MCF 10A (cell line): ENCODE measurements at regions of chr11 and their contacts with region 1.

Region 1: GRCh38 chr11:126231725-126232459 is 20.3 kb downstream of the FAM118B start:
- DNase-seq: peak; percentile 18
- H3K4me3 Mint-ChIP-seq: no peak overlapping the region
- H3K27ac Mint-ChIP-seq: no peak overlapping the region
- H3K4me1 Mint-ChIP-seq: no peaks in the 10 kb centered on the region
- H3K27me3 Mint-ChIP-seq: no peaks in the 10 kb centered on the region
- CTCF ChIP-seq: no peak

Region 2: DNA sequence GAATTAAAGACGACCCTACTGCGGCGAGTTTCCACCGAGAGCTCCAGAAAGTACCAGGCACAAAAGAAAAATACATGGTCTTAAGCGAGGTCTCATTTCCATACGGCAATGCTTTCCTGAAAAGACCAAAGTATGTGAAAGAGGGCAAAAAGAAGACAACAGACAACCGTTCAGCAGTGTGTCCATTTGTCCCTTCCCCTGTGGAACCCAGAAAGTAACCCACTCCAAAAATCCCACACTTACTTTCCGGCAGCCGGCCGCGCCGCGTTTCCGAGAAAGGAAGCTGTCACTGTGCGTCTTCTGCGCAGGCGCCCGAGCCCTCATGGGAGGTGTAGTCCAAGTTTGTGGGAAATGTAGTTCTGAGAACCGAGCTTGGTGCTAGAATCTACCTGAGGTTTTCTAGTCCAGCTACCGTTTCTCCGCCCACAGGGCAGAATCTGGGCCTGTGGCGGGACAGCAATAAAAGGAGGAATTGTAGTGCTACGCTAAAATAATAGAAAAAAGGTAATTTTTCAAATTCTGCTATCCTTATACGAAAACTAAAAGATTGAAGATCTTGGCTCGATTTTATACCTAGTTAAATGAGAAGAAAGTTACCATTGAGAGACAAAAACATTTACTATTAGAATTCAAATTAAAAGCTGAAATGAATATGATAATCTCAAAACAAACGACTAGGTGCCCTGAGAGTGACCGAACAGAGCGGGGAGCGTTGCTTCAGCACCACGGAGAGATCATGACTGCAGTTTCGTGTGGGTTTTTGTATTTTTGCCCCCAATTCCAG is 328.8 kb before region 1 on chr11 and contains the start of gene PUS3:
- CTCF ChIA-PET with region 1: no interaction called
- POLR2A ChIA-PET with region 1: no interaction called
- intact Hi-C with region 1: no loop called
- DNase-seq: peak; percentile 87
- H3K4me3 Mint-ChIP-seq: peak within 1 kb of the TSS; percentile 97
- H3K27ac Mint-ChIP-seq: peak within 1 kb of the TSS; percentile 90
- H3K4me1 Mint-ChIP-seq: peaks cover 10% of the 10 kb centered on the region
- H3K27me3 Mint-ChIP-seq: peaks cover 23% of the 10 kb centered on the region
- CTCF ChIP-seq: no peak
- total RNA-seq, gene PUS3: 12.7 and 16.5 TPM in 2 replicates

Region 3: GRCh38 chr11:126211235-126212088 is 20.4 kb before region 1 on chr11 and contains the starts of genes FAM118B and RPUSD4:
- CTCF ChIA-PET with region 1: no interaction called
- POLR2A ChIA-PET with region 1: interaction called, 14 read pairs
- intact Hi-C with region 1: no loop called
- DNase-seq: peak; percentile 96
- H3K4me3 Mint-ChIP-seq: peak within 1 kb of the TSS; percentile 96
- H3K27ac Mint-ChIP-seq: peak within 1 kb of the TSS; percentile 96
- H3K4me1 Mint-ChIP-seq: peaks cover 18% of the 10 kb centered on the region
- H3K27me3 Mint-ChIP-seq: no peaks in the 10 kb centered on the region
- CTCF ChIP-seq: no peak
- total RNA-seq, gene FAM118B: 8.3 and 13.4 TPM in 2 replicates
- total RNA-seq, gene RPUSD4: 19.4 and 26.7 TPM in 2 replicates

Region 4: DNA sequence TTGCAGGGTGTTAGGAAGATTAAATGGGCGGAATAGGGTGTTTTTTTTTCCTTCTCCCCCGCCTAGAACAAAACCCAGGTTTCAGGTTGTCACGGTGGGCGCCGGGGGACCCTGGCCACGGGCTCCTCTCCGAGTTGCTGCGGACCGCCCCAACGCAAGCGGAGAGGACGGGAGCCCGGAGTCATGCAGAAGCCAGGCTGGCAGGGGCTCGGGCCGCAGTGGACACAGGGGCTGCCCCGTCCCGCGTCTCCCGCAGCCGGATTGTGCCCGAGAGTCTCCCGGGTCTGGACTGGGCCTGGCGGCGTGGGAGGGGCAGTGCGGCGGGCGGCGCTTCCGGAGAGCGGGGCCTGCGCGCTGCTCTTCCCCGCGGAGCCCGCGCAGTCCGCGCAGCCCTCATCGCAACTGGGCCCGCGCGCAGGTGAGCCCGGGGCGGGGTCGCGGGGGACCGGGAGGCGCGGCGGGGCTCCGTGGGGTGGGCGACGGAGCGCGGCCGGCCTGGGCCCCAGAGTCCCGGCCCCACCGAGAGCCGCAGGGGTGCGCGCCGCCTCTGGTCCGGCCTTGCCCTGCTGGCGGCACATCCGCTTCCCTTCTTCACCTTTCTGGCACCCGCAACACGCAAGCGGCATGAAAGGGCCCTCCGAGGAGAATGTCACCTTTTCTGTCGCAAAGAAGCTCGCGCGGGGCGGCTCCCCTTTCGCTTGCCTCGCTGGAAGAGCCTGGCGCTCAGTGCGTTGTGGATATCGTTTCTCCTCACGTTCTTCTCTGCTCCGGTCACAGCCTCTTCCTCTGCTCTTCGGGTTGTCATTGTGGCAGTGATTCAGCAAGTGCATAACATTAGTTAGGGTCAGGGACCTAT is 51.1 kb after region 1 on chr11 and contains the start of gene TIRAP:
- CTCF ChIA-PET with region 1: no interaction called
- POLR2A ChIA-PET with region 1: no interaction called
- intact Hi-C with region 1: no loop called
- DNase-seq: peak; percentile 55
- H3K4me3 Mint-ChIP-seq: peak within 1 kb of the TSS; percentile 83
- H3K27ac Mint-ChIP-seq: peak within 1 kb of the TSS; percentile 80
- H3K4me1 Mint-ChIP-seq: peaks cover 21% of the 10 kb centered on the region
- H3K27me3 Mint-ChIP-seq: no peaks in the 10 kb centered on the region
- CTCF ChIP-seq: no peak
- total RNA-seq, gene TIRAP: 11.9 and 14.0 TPM in 2 replicates

Region 5: GRCh38 chr11:126723665-126724045 is 491.8 kb after region 1 on chr11:
- CTCF ChIA-PET with region 1: no interaction called
- POLR2A ChIA-PET with region 1: no interaction called
- intact Hi-C with region 1: no loop called
- DNase-seq: no peak
- H3K4me3 Mint-ChIP-seq: no peak overlapping the region
- H3K27ac Mint-ChIP-seq: no peak overlapping the region
- H3K4me1 Mint-ChIP-seq: no peaks in the 10 kb centered on the region
- H3K27me3 Mint-ChIP-seq: peaks cover 25% of the 10 kb centered on the region
- CTCF ChIP-seq: no peak